ENCODE measurements at regions of chr10 and their contacts with region 1.

Region 1: GRCh38 chr10:113354711-113355110 is 198.1 kb upstream of the HABP2 start:
- DNase-seq: no peak
- H3K4me3 ChIP-seq: no peak overlapping the region
- H3K27ac ChIP-seq: no peak overlapping the region
- H3K4me1 ChIP-seq: no peaks in the 10 kb centered on the region
- H3K27me3 ChIP-seq: no peaks in the 10 kb centered on the region
- CTCF ChIP-seq: no peak
- POLR2A ChIP-seq: no peak

Region 2: DNA sequence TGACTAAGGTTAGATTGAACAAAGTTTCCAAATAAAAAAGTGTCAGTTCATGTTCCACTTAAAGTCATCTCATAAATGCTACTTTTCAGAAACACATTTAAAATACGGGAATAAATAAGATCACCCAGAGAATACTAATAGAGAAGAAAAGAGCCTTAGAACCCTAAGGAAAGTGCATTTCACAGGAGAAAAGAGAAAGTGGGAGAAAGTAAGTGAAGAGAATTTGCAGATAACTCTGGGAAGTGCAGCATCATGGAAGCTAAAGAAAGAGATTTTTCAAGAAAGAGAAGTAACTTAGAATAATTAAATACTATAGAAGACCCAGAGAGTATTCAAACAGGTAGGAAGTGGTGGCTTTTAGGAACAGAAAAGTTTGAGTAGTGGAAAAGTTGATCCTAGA is 775.1 kb before region 1 on chr10:
- intact Hi-C with region 1: loop called (anchors 5 kb)
- DNase-seq: no peak
- H3K4me3 ChIP-seq: no peak overlapping the region
- H3K27ac ChIP-seq: no peak overlapping the region
- H3K4me1 ChIP-seq: no peaks in the 10 kb centered on the region
- H3K27me3 ChIP-seq: no peaks in the 10 kb centered on the region
- CTCF ChIP-seq: no peak
- POLR2A ChIP-seq: no peak